ENCODE measurements at regions of chr3 and their contacts with region 1.

Region 1: DNA sequence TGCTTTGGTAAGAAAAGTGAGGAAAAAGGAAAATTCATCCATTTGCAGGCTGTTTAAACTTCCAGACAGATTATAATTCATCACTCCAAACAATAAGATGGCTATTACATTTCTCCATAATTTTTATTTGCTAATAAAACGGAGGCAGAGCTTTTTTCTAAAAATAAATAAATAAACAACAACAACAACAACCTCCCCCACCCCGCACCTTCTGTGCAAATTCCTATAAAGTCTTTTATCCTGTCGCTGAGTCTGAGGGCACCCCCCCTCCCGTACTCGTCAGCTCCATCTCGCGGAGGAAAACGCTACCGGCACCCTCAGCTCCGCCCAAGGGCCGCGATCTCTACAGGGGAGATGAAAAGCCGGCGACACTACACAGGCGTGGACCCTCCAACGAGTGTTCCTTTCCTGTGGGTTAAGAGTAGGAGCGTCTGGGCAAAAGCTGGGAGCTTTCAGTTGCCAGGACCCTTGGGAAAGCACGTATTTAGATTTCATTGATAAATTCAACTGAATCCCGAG is 1.0 kb upstream of the ATP1B3 start:
- DNase-seq: peak; percentile 90
- H3K4me3 Mint-ChIP-seq: peak overlapping the region; percentile 92
- H3K27ac Mint-ChIP-seq: peak overlapping the region; percentile 93
- H3K4me1 Mint-ChIP-seq: peaks cover 28% of the 10 kb centered on the region
- H3K27me3 Mint-ChIP-seq: no peaks in the 10 kb centered on the region

Region 2: GRCh38 chr3:141412087-141412935 is 463.1 kb before region 1 on chr3:
- CTCF ChIA-PET with region 1: no interaction called
- intact Hi-C with region 1: loop called (anchors 1 kb)
- DNase-seq: peak; percentile 73
- H3K4me3 Mint-ChIP-seq: peak overlapping the region; percentile 72
- H3K27ac Mint-ChIP-seq: peak overlapping the region; percentile 97
- H3K4me1 Mint-ChIP-seq: peaks cover 72% of the 10 kb centered on the region
- H3K27me3 Mint-ChIP-seq: no peaks in the 10 kb centered on the region

Region 3: DNA sequence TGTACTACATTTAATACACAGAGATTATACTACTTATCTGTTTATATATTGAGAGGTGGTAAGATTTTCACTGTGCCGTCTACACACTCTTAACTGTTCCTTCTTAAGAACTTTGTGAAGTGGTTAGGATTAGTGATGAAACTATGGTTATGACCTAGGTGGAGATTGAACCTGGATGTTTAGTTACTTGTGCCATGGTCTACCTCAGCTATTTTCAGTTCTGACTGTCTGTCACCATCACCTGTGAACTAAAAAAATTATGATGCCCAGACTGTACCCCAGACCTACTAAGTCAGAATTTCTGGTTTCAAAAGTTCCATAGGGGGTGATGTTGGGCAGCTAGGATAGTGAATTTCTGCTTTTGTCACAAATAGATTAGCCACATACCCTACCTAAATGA is 382.2 kb before region 1 on chr3:
- CTCF ChIA-PET with region 1: no interaction called
- intact Hi-C with region 1: no loop called
- DNase-seq: no peak
- H3K4me3 Mint-ChIP-seq: no peak overlapping the region
- H3K27ac Mint-ChIP-seq: peak overlapping the region; percentile 27
- H3K4me1 Mint-ChIP-seq: peaks cover 90% of the 10 kb centered on the region
- H3K27me3 Mint-ChIP-seq: no peaks in the 10 kb centered on the region

Region 4: GRCh38 chr3:141796081-141796888 is 79.1 kb before region 1 on chr3:
- CTCF ChIA-PET with region 1: interaction called, 15 read pairs
- intact Hi-C with region 1: loop called (anchors 1 kb)
- DNase-seq: peak; percentile 90
- H3K4me3 Mint-ChIP-seq: peak overlapping the region; percentile 74
- H3K27ac Mint-ChIP-seq: peak overlapping the region; percentile 89
- H3K4me1 Mint-ChIP-seq: peaks cover 46% of the 10 kb centered on the region
- H3K27me3 Mint-ChIP-seq: no peaks in the 10 kb centered on the region

Region 5: GRCh38 chr3:141830508-141830907 is 44.9 kb before region 1 on chr3:
- CTCF ChIA-PET with region 1: no interaction called
- intact Hi-C with region 1: no loop called
- DNase-seq: no peak
- H3K4me3 Mint-ChIP-seq: no peak overlapping the region
- H3K27ac Mint-ChIP-seq: no peak overlapping the region
- H3K4me1 Mint-ChIP-seq: no peaks in the 10 kb centered on the region
- H3K27me3 Mint-ChIP-seq: no peaks in the 10 kb centered on the region

Region 6: GRCh38 chr3:141894524-141895178 is 19.2 kb after region 1 on chr3:
- CTCF ChIA-PET with region 1: interaction called, 3 read pairs
- intact Hi-C with region 1: loop called (anchors 1 kb)
- DNase-seq: no peak
- H3K4me3 Mint-ChIP-seq: no peak overlapping the region
- H3K27ac Mint-ChIP-seq: no peak overlapping the region
- H3K4me1 Mint-ChIP-seq: peaks cover 36% of the 10 kb centered on the region
- H3K27me3 Mint-ChIP-seq: no peaks in the 10 kb centered on the region

Region 7: GRCh38 chr3:142028243-142028777 is 152.9 kb after region 1 on chr3:
- CTCF ChIA-PET with region 1: no interaction called
- intact Hi-C with region 1: loop called (anchors 1 kb)
- DNase-seq: peak; percentile 62
- H3K4me3 Mint-ChIP-seq: peak overlapping the region; percentile 80
- H3K27ac Mint-ChIP-seq: peak overlapping the region; percentile 73
- H3K4me1 Mint-ChIP-seq: peaks cover 24% of the 10 kb centered on the region
- H3K27me3 Mint-ChIP-seq: no peaks in the 10 kb centered on the region

Region 8: GRCh38 chr3:142077849-142078500 is 202.5 kb after region 1 on chr3:
- CTCF ChIA-PET with region 1: no interaction called
- intact Hi-C with region 1: no loop called
- DNase-seq: no peak
- H3K4me3 Mint-ChIP-seq: no peak overlapping the region
- H3K27ac Mint-ChIP-seq: no peak overlapping the region
- H3K4me1 Mint-ChIP-seq: no peaks in the 10 kb centered on the region
- H3K27me3 Mint-ChIP-seq: no peaks in the 10 kb centered on the region

Region 9: DNA sequence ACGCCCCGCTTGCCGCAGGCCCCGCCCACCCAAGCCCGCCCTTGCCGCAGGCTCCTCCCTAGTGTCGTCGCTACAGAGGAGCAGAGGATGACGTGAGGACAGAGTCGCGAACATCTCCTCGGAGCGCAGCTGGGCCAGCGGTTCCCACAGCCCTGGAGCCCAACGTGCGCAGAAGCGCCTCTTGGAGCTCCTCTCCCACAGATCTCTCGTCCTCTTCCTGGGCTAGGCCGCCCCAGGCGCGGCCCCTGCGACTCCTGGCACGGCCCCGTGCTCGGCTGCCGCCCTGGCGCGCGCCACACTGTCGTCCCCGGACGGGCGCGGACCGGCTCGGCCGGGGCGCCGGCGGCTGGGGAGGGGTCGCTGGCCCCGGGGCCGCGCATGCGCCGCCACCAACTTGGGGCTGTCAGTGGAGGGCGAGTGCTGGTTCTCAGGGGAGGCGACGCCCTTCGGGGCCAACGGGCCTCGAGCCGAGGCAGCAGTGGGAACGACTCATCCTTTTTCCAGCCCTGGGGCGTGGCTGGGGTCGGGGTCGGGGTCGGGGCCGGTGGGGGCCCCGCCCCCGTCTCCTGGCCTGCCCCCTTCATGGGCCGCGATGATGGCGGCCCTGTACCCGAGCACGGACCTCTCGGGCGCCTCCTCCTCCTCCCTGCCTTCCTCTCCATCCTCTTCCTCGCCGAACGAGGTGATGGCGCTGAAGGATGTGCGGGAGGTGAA is 848.7 kb after region 1 on chr3 and contains the start of gene TRPC1:
- CTCF ChIA-PET with region 1: no interaction called
- intact Hi-C with region 1: loop called (anchors 5 kb)
- DNase-seq: peak; percentile 57
- H3K4me3 Mint-ChIP-seq: peak within 1 kb of the TSS; percentile 83
- H3K27ac Mint-ChIP-seq: peak within 1 kb of the TSS; percentile 82
- H3K4me1 Mint-ChIP-seq: peaks cover 10% of the 10 kb centered on the region
- H3K27me3 Mint-ChIP-seq: peaks cover 20% of the 10 kb centered on the region
- total RNA-seq, gene TRPC1: 3.1 to 4.8 TPM

Measured in activated naive CD4-positive, alpha-beta T cell treated with anti-CD3 and anti-CD28 coated beads for 36 hours (primary cell).